Naive thymus-derived CD8-positive, alpha-beta T cell (primary cell): ENCODE measurements at regions of chr7 and their contacts with region 1.

Region 1: GRCh38 chr7:73578342-73579127 is at the start of gene TBL2:
- DNase-seq: peak; percentile 92 to 99 (median 98)
- ATAC-seq: peak; percentile 86 to 91
- H3K4me3 Mint-ChIP-seq: peak within 1 kb of the TSS; percentile 91 to 100 (median 97)
- H3K27ac Mint-ChIP-seq: peak within 1 kb of the TSS; percentile 95 to 100 (median 98)
- H3K4me1 Mint-ChIP-seq: peaks cover 15 to 37% (median 30%) of the 10 kb centered on the region in 4 donors
- H3K27me3 Mint-ChIP-seq: no peaks in the 10 kb centered on the region
- polyA plus RNA-seq, gene TBL2: 13.4 to 19.6 (median 18.4) TPM

Region 2: DNA sequence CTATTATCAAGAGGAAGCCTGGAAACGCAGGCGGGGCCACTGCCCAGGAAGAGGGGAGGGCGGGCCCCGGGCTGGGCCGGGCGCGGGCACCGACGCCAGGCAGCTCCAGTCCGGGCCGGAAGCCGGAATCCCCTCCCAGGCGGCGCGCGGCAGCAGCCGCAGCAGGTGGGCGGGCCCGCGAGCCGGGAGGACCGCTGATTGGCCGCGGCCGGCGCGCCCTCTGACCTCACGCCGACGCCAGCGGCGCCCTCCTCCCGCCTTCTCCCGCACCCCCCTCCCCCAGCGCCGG is 21.5 kb before region 1 on chr7:
- POLR2A ChIA-PET with region 1: interaction called, 17 read pairs
- DNase-seq: peak; percentile 85 to 93 (median 90)
- ATAC-seq: peak; percentile 90 to 93
- H3K4me3 Mint-ChIP-seq: peak overlapping the region; percentile 89 to 97 (median 94)
- H3K27ac Mint-ChIP-seq: peak overlapping the region in 9 of 10 donors; percentile 92 to 98 (median 95)
- H3K4me1 Mint-ChIP-seq: peaks cover 20 to 38% (median 35%) of the 10 kb centered on the region in 4 donors
- H3K27me3 Mint-ChIP-seq: no peaks in the 10 kb centered on the region

Region 3: DNA sequence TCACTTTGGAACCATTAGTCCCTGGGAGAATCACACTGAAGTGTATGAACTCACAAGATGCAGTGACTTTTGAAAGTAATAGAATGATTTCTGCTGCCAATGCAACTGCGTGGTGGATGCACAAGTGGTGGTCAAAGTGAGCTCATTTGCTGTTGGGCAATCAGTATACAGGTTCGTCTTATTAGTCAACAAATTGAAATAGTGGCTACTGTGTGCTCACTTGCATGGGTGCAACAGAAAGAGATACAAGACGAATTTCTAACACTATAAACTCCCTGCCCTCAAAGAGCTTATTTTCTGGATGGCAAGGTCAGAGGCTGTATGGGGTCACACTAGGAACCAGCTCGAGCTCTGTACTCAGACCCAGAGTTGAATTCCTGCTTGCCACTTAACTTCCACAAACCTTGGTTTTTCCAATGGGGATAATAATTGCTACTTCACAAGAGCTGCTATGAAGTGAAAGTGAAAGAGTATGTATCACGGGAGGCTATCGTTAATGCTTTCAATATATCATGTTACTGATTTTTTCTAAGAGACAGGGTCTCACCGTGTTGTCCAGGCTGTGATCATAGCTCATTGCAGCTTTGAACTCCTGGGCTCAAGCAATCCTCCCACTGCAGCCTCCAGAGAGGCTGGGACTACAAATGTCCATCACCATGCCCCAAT is 12.7 kb before region 1 on chr7:
- POLR2A ChIA-PET with region 1: interaction called, 16 read pairs
- DNase-seq: no peak
- ATAC-seq: peak; percentile 39 to 49
- H3K4me3 Mint-ChIP-seq: peak overlapping the region; percentile 65 to 86 (median 84)
- H3K27ac Mint-ChIP-seq: peak overlapping the region; percentile 29 to 88 (median 82)
- H3K4me1 Mint-ChIP-seq: peaks cover 11 to 38% (median 23%) of the 10 kb centered on the region in 4 donors
- H3K27me3 Mint-ChIP-seq: no peaks in the 10 kb centered on the region